ENCODE measurements at regions of chrX and their contacts with region 1.

Region 1: GRCh38 chrX:49915361-49916222 is 6.8 kb upstream of the CLCN5 start:
- DNase-seq: no peak
- ATAC-seq: peak; percentile 66
- H3K4me3 Mint-ChIP-seq: no peak overlapping the region
- H3K27ac Mint-ChIP-seq: no peak overlapping the region
- H3K4me1 Mint-ChIP-seq: peaks cover under 1% of the 10 kb centered on the region
- H3K27me3 Mint-ChIP-seq: no peaks in the 10 kb centered on the region
- CTCF ChIP-seq: no peak

Region 2: GRCh38 chrX:50204364-50204899 is 288.8 kb after region 1 on chrX and contains the start of gene CCNB3:
- CTCF ChIA-PET with region 1: interaction called, 3 read pairs
- POLR2A ChIA-PET with region 1: no interaction called
- intact Hi-C with region 1: loop called (anchors 1 kb)
- DNase-seq: peak; percentile 30
- ATAC-seq: peak; percentile 98
- H3K4me3 Mint-ChIP-seq: peak within 1 kb of the TSS; percentile 85
- H3K27ac Mint-ChIP-seq: peak within 1 kb of the TSS; percentile 93
- H3K4me1 Mint-ChIP-seq: peaks cover 7% of the 10 kb centered on the region
- H3K27me3 Mint-ChIP-seq: no peaks in the 10 kb centered on the region
- CTCF ChIP-seq: no peak
- total RNA-seq, gene CCNB3: 0.37 and 1.4 TPM in 2 replicates

Region 3: GRCh38 chrX:50333308-50333707 is 417.7 kb after region 1 on chrX:
- CTCF ChIA-PET with region 1: no interaction called
- POLR2A ChIA-PET with region 1: no interaction called
- intact Hi-C with region 1: loop called (anchors 5 kb)
- DNase-seq: no peak
- ATAC-seq: no peak
- H3K4me3 Mint-ChIP-seq: no peak overlapping the region
- H3K27ac Mint-ChIP-seq: no peak overlapping the region
- H3K4me1 Mint-ChIP-seq: no peaks in the 10 kb centered on the region
- H3K27me3 Mint-ChIP-seq: peaks cover 2% of the 10 kb centered on the region
- CTCF ChIP-seq: no peak

Region 4: GRCh38 chrX:50579955-50580354 is 664.4 kb after region 1 on chrX:
- CTCF ChIA-PET with region 1: interaction called, 10 read pairs
- POLR2A ChIA-PET with region 1: no interaction called
- intact Hi-C with region 1: loop called (anchors 1 kb)
- DNase-seq: no peak
- ATAC-seq: no peak
- H3K4me3 Mint-ChIP-seq: no peak overlapping the region
- H3K27ac Mint-ChIP-seq: no peak overlapping the region
- H3K4me1 Mint-ChIP-seq: no peaks in the 10 kb centered on the region
- H3K27me3 Mint-ChIP-seq: peaks cover 2% of the 10 kb centered on the region
- CTCF ChIP-seq: no peak

Region 5: GRCh38 chrX:50905334-50905733 is 989.7 kb after region 1 on chrX:
- CTCF ChIA-PET with region 1: no interaction called
- POLR2A ChIA-PET with region 1: no interaction called
- intact Hi-C with region 1: loop called (anchors 5 kb)
- DNase-seq: no peak
- ATAC-seq: no peak
- H3K4me3 Mint-ChIP-seq: no peak overlapping the region
- H3K27ac Mint-ChIP-seq: no peak overlapping the region
- H3K4me1 Mint-ChIP-seq: no peaks in the 10 kb centered on the region
- H3K27me3 Mint-ChIP-seq: no peaks in the 10 kb centered on the region
- CTCF ChIP-seq: no peak